ENCODE measurements at regions of chr5 and their contacts with region 1.

Region 1: DNA sequence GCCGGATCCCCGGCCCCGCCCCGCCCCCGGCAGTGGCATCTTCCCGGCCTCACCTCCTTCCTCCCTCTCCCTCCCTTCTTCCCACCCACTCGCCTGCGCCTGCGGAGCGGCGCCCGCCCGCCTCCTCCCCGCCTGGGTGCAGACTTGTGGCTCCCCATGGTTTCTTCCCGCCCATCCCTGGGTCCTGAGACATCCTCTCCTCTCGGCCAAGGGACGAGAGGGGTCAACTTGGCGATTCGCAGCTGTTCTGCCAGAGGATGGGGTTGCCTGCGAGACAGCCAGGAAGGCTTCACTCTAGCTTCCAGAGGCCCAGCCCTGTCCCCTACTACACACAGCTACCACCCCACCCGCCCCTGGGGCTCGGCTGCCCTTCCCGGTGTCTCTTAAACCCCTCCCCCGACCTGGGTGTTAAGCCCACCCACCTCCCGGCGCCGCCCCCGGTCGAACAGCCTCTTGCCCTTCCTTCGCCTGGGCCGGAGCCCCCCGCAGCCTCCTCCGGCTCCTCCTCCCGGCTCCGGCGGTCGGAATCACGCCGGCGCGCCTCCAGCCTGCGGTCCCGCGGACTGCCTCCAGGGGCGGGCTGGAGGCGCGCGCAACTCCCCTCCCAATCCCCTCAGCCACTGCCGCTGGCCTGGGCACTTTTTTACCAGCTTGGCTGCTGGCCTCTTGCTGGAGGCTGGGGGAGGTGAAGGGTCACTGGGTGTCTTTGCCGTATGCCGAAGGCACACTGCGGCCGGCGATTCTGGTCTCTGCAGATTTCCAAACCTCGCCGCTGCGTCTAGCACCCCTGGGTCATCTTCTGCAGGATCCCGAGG is 1.9 kb downstream of the JADE2 start:
- DNase-seq: peak; percentile 34 to 82 (median 60)
- ATAC-seq: peak; percentile 45
- H3K4me3 ChIP-seq: peak overlapping the region; percentile 100
- H3K4me3 Mint-ChIP-seq: peak overlapping the region; percentile 91 to 100 (median 98)
- H3K27ac ChIP-seq: peak overlapping the region; percentile 97
- H3K27ac Mint-ChIP-seq: peak overlapping the region; percentile 48 to 99 (median 93)
- H3K4me1 ChIP-seq: peaks cover 43 to 50% of the 10 kb centered on the region in 2 donors
- H3K4me1 Mint-ChIP-seq: peaks cover 37 to 57% (median 52%) of the 10 kb centered on the region in 7 donors
- H3K27me3 ChIP-seq: no peaks in the 10 kb centered on the region
- H3K27me3 Mint-ChIP-seq: no peaks in the 10 kb centered on the region

Region 2: DNA sequence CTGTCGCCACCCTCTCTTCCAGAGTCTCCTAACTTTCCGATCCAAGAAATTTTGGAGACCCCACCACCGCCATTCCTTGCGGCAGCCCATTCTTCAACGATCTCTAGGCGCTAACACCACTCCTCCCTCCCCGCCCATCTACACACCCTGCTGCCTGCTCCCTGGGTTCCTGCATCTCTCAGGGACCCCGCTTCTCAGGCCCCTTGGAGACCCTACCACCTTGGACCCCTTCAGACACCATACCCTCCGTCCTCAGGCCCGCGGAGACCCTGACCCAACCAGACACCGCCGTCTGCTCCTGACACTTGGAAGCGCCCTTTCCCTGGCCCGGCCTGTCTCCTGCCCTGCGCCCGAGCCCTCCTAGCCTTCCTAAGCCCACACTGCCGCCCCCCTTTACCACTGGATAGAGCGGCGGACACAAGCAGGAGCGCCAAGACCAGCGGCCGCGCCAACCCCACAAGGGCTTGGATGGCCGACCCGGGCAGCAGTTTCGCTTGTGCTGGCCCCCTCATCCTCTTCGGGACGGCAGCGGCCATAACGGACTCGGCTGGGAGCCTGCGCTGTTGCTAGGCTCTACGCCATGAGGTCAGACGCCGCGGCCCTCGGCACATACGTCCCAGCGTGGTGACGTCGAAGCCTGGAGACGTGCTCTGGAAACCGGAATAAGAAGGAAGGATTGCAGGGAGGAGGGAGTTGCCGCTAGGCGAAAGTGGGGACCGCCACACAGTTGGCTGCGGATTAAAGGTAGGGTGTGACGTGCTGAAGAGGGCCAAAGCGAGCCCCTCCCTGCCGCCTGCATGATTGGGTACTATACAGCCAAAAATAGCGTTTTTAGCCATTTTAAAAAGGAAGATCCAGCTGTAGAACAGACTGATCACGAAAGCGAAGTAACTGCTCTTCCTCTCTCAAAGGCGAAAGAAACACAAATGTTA is 559.0 kb before region 1 on chr5 and contains the start of gene C5orf15:
- CTCF ChIA-PET with region 1: no interaction called
- POLR2A ChIA-PET with region 1: no interaction called
- intact Hi-C with region 1: loop called in 1 of 2 experiments (anchors 2 kb)
- DNase-seq: peak; percentile 72 to 93 (median 87)
- ATAC-seq: peak; percentile 98
- H3K4me3 ChIP-seq: peak within 1 kb of the TSS; percentile 90
- H3K4me3 Mint-ChIP-seq: peak within 1 kb of the TSS; percentile 93 to 100 (median 98)
- H3K27ac ChIP-seq: peak within 1 kb of the TSS; percentile 94
- H3K27ac Mint-ChIP-seq: peak within 1 kb of the TSS; percentile 92 to 99 (median 97)
- H3K4me1 ChIP-seq: peaks cover 10 to 16% of the 10 kb centered on the region in 2 donors
- H3K4me1 Mint-ChIP-seq: peaks cover 21 to 63% (median 52%) of the 10 kb centered on the region in 7 donors
- H3K27me3 ChIP-seq: no peaks in the 10 kb centered on the region
- H3K27me3 Mint-ChIP-seq: no peaks in the 10 kb centered on the region
- total RNA-seq, gene C5orf15: 11.1 to 33.6 (median 17.9) TPM

Region 3: GRCh38 chr5:134411546-134412266 is 115.6 kb before region 1 on chr5 and contains the start of gene CDKN2AIPNL:
- CTCF ChIA-PET with region 1: interaction called, 6 read pairs
- POLR2A ChIA-PET with region 1: interaction called, 130 read pairs
- intact Hi-C with region 1: loop called (anchors 1 kb)
- DNase-seq: peak; percentile 83 to 93 (median 89)
- ATAC-seq: peak; percentile 100
- H3K4me3 ChIP-seq: peak within 1 kb of the TSS; percentile 82
- H3K4me3 Mint-ChIP-seq: peak within 1 kb of the TSS; percentile 86 to 96 (median 92)
- H3K27ac ChIP-seq: peak within 1 kb of the TSS; percentile 82
- H3K27ac Mint-ChIP-seq: peak within 1 kb of the TSS; percentile 63 to 93 (median 90)
- H3K4me1 ChIP-seq: peaks cover 16 to 23% of the 10 kb centered on the region in 2 donors
- H3K4me1 Mint-ChIP-seq: peaks cover 20 to 54% (median 38%) of the 10 kb centered on the region in 7 donors
- H3K27me3 ChIP-seq: no peaks in the 10 kb centered on the region
- H3K27me3 Mint-ChIP-seq: no peaks in the 10 kb centered on the region
- total RNA-seq, gene CDKN2AIPNL: 11.5 to 20.8 (median 16.8) TPM

Region 4: GRCh38 chr5:134503088-134503946 is 24.0 kb before region 1 on chr5:
- CTCF ChIA-PET with region 1: no interaction called
- POLR2A ChIA-PET with region 1: interaction called, 8 read pairs
- intact Hi-C with region 1: loop called (anchors 1 kb)
- DNase-seq: peak in 7 of 9 donors; percentile 15 to 73 (median 30)
- ATAC-seq: peak; percentile 77
- H3K4me3 ChIP-seq: no peak overlapping the region
- H3K4me3 Mint-ChIP-seq: peak overlapping the region in 9 of 10 donors; percentile 19 to 79 (median 48)
- H3K27ac ChIP-seq: peak overlapping the region; percentile 44
- H3K27ac Mint-ChIP-seq: peak overlapping the region; percentile 55 to 98 (median 86)
- H3K4me1 ChIP-seq: peaks cover 16 to 21% of the 10 kb centered on the region in 2 donors
- H3K4me1 Mint-ChIP-seq: peaks cover 11 to 43% (median 14%) of the 10 kb centered on the region in 7 donors
- H3K27me3 ChIP-seq: no peaks in the 10 kb centered on the region
- H3K27me3 Mint-ChIP-seq: no peaks in the 10 kb centered on the region

Region 5: GRCh38 chr5:134637161-134637582 is 109.8 kb after region 1 on chr5:
- CTCF ChIA-PET with region 1: no interaction called
- POLR2A ChIA-PET with region 1: interaction called, 4 read pairs
- intact Hi-C with region 1: loop called (anchors 2 kb)
- DNase-seq: no peak
- ATAC-seq: no peak
- H3K4me3 ChIP-seq: no peak overlapping the region
- H3K4me3 Mint-ChIP-seq: no peak overlapping the region
- H3K27ac ChIP-seq: no peak overlapping the region
- H3K27ac Mint-ChIP-seq: no peak overlapping the region
- H3K4me1 ChIP-seq: no peaks in the 10 kb centered on the region
- H3K4me1 Mint-ChIP-seq: peaks cover 0 to 10% (median 4%) of the 10 kb centered on the region in 7 donors
- H3K27me3 ChIP-seq: no peaks in the 10 kb centered on the region
- H3K27me3 Mint-ChIP-seq: no peaks in the 10 kb centered on the region

Region 6: GRCh38 chr5:134845852-134846640 is 318.7 kb after region 1 on chr5 and contains the start of gene C5orf24:
- CTCF ChIA-PET with region 1: no interaction called
- POLR2A ChIA-PET with region 1: no interaction called
- intact Hi-C with region 1: loop called (anchors 2 kb)
- DNase-seq: peak; percentile 83 to 93 (median 90)
- ATAC-seq: peak; percentile 98
- H3K4me3 ChIP-seq: peak within 1 kb of the TSS; percentile 60
- H3K4me3 Mint-ChIP-seq: peak within 1 kb of the TSS; percentile 84 to 99 (median 94)
- H3K27ac ChIP-seq: peak within 1 kb of the TSS; percentile 96
- H3K27ac Mint-ChIP-seq: peak within 1 kb of the TSS; percentile 94 to 99 (median 97)
- H3K4me1 ChIP-seq: peaks cover 16 to 19% of the 10 kb centered on the region in 2 donors
- H3K4me1 Mint-ChIP-seq: peaks cover 12 to 42% (median 31%) of the 10 kb centered on the region in 7 donors
- H3K27me3 ChIP-seq: no peaks in the 10 kb centered on the region
- H3K27me3 Mint-ChIP-seq: no peaks in the 10 kb centered on the region
- total RNA-seq, gene C5orf24: 20.3 to 42.7 (median 37.9) TPM